Mammary epithelial cell (primary cell): ENCODE measurements at regions of chr16 and their contacts with region 1.

Region 1: GRCh38 chr16:15714393-15715172 is 64.5 kb downstream of the NDE1 start:
- DNase-seq: no peak
- H3K4me3 ChIP-seq: no peak overlapping the region
- H3K27ac ChIP-seq: no peak overlapping the region
- H3K4me1 ChIP-seq: no peaks in the 10 kb centered on the region
- H3K27me3 ChIP-seq: no peaks in the 10 kb centered on the region
- CTCF ChIP-seq: no peak

Region 2: DNA sequence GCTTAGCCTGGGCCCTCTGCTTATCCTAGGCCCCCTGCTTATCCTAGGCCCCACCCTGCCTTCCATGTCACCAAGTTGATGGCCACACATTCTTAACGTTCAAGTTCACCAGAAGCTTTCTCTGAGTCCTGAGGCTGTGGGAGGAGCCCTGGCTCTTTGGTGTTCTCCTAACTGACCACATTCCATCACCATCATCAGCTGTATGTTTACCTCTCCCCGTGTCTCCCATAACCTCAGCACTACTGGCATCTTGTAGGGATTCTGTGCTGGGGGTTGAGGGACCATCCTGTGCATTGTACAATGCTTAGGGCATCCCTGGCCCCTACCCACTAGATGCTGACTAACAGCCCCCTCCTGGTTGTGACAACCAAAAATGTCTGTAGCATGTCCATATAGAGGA is 34.8 kb after region 1 on chr16:
- CTCF ChIA-PET with region 1: no interaction called
- dilution Hi-C with region 1: no loop called
- in situ Hi-C with region 1: no loop called
- intact Hi-C with region 1: no loop called
- DNase-seq: no peak
- H3K4me3 ChIP-seq: no peak overlapping the region
- H3K27ac ChIP-seq: no peak overlapping the region
- H3K4me1 ChIP-seq: no peaks in the 10 kb centered on the region
- H3K27me3 ChIP-seq: no peaks in the 10 kb centered on the region
- CTCF ChIP-seq: no peak

Region 3: GRCh38 chr16:15782573-15783365 is 68.2 kb after region 1 on chr16:
- CTCF ChIA-PET with region 1: no interaction called
- dilution Hi-C with region 1: loop called (anchors 5 kb)
- in situ Hi-C with region 1: no loop called
- intact Hi-C with region 1: no loop called
- DNase-seq: no peak
- H3K4me3 ChIP-seq: no peak overlapping the region
- H3K27ac ChIP-seq: no peak overlapping the region
- H3K4me1 ChIP-seq: no peaks in the 10 kb centered on the region
- H3K27me3 ChIP-seq: no peaks in the 10 kb centered on the region
- CTCF ChIP-seq: no peak

Region 4: DNA sequence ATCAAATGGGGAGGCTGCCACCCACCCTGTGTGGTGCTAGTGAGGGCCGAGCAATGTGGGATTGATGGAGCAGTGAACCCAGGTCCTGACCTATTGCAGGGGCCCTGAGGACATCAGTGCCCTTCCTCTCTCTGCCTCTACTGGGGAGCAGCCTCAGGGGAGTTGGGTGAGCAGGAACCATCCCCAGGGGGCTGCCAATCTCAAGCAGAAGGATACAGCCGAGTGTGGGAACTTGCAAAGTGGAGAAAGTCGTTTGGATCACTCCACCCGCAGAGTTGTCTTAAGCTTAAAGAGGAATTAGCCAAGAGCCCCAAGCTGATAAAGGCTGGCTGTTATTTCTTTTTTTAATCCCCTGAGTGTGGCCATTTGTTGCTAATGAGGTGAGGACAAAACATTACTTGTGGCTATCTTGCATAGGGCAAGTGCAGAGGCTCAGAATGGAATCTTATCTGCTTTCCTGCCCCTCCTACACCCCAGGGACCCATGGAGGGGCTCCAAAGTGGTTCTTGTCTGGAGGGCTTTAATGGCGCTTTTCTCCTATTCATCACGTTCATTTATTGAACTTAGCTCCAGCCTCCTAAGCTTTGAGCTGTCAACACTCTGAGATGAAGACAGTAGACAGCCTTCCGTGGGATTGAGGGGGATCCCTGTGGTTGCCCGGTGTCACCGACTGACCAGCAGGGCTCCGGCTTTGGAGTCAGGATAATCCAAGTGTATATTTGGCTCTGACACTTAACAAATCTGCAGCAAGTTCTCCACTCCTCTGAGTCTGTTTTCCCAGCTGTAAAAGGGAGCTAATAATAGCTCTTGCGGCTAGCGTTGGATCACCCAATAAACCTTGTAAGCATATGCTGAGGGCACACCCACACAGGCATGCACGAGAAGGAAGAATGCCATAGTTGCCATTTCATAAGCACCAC is 97.2 kb after region 1 on chr16:
- CTCF ChIA-PET with region 1: no interaction called
- dilution Hi-C with region 1: loop called (anchors 5 kb)
- in situ Hi-C with region 1: no loop called
- intact Hi-C with region 1: no loop called
- DNase-seq: peak; percentile 86
- H3K4me3 ChIP-seq: no peak overlapping the region
- H3K27ac ChIP-seq: no peak overlapping the region
- H3K4me1 ChIP-seq: peaks cover 7% of the 10 kb centered on the region
- H3K27me3 ChIP-seq: peaks cover 3% of the 10 kb centered on the region
- CTCF ChIP-seq: no peak